AG04450 (cell line): ENCODE measurements at regions of chr12 and their contacts with region 1.

Region 1: GRCh38 chr12:751192-751998 is 984 bp upstream of the WNK1 start:
- DNase-seq: peak; percentile 94
- H3K4me3 ChIP-seq: peak overlapping the region; percentile 64
- H3K27ac ChIP-seq: peak overlapping the region; percentile 68
- H3K27me3 ChIP-seq: no peaks in the 10 kb centered on the region
- CTCF ChIP-seq: peak; percentile 87

Region 2: GRCh38 chr12:569803-570434 is 181.5 kb before region 1 on chr12:
- CTCF ChIA-PET with region 1: interaction called, 145 read pairs
- POLR2A ChIA-PET with region 1: interaction called, 19 read pairs
- DNase-seq: peak; percentile 48
- H3K4me3 ChIP-seq: peak overlapping the region; percentile 69
- H3K27ac ChIP-seq: peak overlapping the region; percentile 69
- H3K27me3 ChIP-seq: peaks cover 10% of the 10 kb centered on the region
- CTCF ChIP-seq: peak; percentile 90

Region 3: GRCh38 chr12:575948-576612 is 175.3 kb before region 1 on chr12:
- CTCF ChIA-PET with region 1: interaction called, 145 read pairs
- POLR2A ChIA-PET with region 1: interaction called, 19 read pairs
- DNase-seq: no peak
- H3K4me3 ChIP-seq: peak overlapping the region; percentile 20; the same call in 1 of the 2 replicates
- H3K27ac ChIP-seq: no peak overlapping the region
- H3K27me3 ChIP-seq: peaks cover 6% of the 10 kb centered on the region
- CTCF ChIP-seq: peak; percentile 92

Region 4: DNA sequence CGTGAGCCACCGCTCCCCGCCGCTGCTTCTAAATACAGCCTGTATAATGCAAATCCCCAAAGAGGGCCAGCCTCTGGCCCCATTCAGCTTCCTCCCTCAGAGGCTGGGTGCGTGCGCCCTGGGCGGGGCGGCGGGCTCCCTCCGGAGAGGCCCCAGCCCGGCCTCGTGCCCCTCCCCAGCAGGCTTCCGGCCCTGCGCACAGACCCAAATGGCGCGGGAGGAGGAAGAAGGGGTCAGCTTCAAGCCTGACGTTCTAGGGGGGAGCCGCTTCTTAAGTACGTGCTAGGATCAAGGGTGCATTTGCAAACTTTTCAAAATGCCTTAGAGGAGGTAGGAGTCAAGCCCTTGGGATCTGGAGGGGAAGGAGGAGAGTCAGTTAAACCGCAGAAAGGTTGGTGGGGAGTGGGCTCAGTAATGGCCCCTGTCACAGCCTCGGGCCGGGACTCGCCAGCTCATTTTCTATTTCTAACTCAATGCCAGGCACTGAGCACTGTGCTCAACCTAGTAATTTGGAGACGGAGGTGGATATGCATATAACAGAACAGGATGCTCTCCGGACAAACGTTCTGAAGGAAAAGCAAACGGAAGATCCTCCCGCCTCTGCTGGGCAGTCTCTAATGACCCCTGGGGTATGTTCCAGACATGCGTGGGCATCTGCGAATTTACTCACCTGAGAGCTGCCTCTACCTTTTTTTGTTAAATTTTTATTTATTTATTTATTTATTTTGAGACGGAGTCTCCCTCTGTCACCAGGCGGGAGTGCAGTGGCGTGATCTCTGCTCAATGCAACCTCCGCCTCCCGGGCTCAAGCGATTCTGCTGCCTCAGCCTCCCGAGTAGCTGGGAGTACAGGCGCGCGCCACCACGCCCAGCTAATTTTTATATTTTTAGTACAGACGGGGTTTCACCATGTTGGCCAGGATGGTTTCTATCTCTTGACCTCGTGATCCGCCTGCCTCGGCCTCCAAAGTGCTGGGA is 120.5 kb before region 1 on chr12:
- CTCF ChIA-PET with region 1: interaction called, 14 read pairs
- POLR2A ChIA-PET with region 1: interaction called, 7 read pairs
- DNase-seq: no peak
- H3K4me3 ChIP-seq: no peak overlapping the region
- H3K27ac ChIP-seq: no peak overlapping the region
- H3K27me3 ChIP-seq: no peaks in the 10 kb centered on the region
- CTCF ChIP-seq: no peak

Region 5: GRCh38 chr12:724194-724855 is 27.1 kb before region 1 on chr12:
- CTCF ChIA-PET with region 1: interaction called, 17 read pairs
- POLR2A ChIA-PET with region 1: no interaction called
- DNase-seq: no peak
- H3K4me3 ChIP-seq: no peak overlapping the region
- H3K27ac ChIP-seq: no peak overlapping the region
- H3K27me3 ChIP-seq: no peaks in the 10 kb centered on the region
- CTCF ChIP-seq: no peak

Region 6: GRCh38 chr12:737122-737739 is 14.2 kb before region 1 on chr12:
- CTCF ChIA-PET with region 1: interaction called, 41 read pairs
- POLR2A ChIA-PET with region 1: no interaction called
- DNase-seq: no peak
- H3K4me3 ChIP-seq: no peak overlapping the region
- H3K27ac ChIP-seq: no peak overlapping the region
- H3K27me3 ChIP-seq: peaks cover 2% of the 10 kb centered on the region
- CTCF ChIP-seq: no peak

Region 7: GRCh38 chr12:779745-780734 is 28.6 kb after region 1 on chr12:
- CTCF ChIA-PET with region 1: interaction called, 28 read pairs
- POLR2A ChIA-PET with region 1: no interaction called
- DNase-seq: peak; percentile 7
- H3K4me3 ChIP-seq: no peak overlapping the region
- H3K27ac ChIP-seq: no peak overlapping the region
- H3K27me3 ChIP-seq: no peaks in the 10 kb centered on the region
- CTCF ChIP-seq: no peak